ENCODE measurements at regions of chr14 and their contacts with region 1.

Region 1: DNA sequence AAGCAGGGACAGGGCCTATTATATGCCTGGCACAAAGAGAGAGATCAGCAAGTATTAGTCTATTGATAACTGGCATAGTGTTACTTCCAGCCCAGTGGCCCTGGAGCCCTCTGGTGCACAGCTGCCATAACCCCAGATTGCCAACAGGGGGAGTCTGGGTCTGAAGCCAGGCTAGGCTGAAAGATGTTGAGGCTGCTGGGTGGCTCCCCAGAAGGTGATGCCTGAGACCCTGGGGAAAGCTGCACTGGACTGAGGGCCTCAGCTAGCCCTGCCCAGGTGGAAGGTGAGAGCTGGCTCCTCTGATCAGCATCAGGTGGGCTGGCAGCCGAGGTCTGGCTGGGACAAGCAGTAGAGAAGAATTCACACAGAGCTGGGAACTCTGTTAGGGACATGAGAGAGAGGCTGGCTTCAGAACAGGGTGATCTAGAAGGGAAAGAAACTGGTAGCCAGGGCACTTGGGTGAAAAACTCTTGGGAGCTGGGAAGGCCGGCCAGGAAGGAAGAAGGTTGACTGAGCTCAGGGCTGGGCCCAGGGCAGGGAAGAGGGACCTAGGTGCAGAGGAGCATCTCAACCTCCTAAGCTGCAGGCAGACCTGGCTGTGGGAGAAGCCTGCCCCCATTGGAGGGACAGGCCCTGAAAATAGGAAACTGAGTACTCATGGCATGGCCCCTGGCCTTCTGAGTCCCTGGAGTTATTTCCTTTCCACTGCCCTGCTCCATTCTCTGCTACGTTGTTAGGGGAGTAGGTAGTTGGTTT is 3.9 kb downstream of the GZMH start:
- H3K4me3 Mint-ChIP-seq: no peak overlapping the region
- H3K27ac Mint-ChIP-seq: no peak overlapping the region
- H3K4me1 Mint-ChIP-seq: peaks cover 35% of the 10 kb centered on the region
- H3K27me3 Mint-ChIP-seq: peaks cover 2% of the 10 kb centered on the region

Region 2: DNA sequence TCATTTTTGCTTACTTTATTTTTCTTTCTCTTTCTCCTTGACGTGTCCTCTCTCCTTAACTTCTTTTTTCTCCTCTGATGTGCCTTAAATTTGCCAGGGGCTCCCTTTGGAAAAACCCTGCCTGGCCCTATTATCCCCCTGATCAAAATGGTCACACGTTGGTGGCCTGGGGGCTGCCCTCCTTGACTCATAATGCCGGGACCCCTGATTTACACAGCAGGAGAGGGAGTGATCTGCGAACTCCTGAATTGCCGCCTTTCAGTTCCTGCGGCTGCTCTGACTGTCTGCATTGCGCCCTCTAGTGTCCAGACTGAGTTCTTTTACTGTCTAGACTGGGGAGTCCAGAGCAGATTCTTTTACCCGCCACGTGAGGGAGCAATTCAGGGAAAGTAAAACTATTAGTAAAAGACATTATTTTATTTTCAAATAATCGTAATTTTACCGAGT is 73.2 kb after region 1 on chr14:
- intact Hi-C with region 1: loop called (anchors 2 kb)
- H3K4me3 Mint-ChIP-seq: peak overlapping the region; percentile 83
- H3K27ac Mint-ChIP-seq: peak overlapping the region; percentile 80
- H3K4me1 Mint-ChIP-seq: peaks cover 33% of the 10 kb centered on the region
- H3K27me3 Mint-ChIP-seq: peaks cover 4% of the 10 kb centered on the region